Psoas muscle (tissue), 8 donors: ENCODE measurements at regions of chr16 and their contacts with region 1.

Region 1: GRCh38 chr16:15699819-15700218 is 49.8 kb downstream of the NDE1 start:
- DNase-seq: no peak
- ATAC-seq: no peak
- H3K4me3 ChIP-seq: no peak overlapping the region
- H3K27ac ChIP-seq: no peak overlapping the region
- H3K4me1 ChIP-seq: no peaks in the 10 kb centered on the region
- H3K27me3 ChIP-seq: no peaks in the 10 kb centered on the region
- CTCF ChIP-seq: no peak

Region 2: DNA sequence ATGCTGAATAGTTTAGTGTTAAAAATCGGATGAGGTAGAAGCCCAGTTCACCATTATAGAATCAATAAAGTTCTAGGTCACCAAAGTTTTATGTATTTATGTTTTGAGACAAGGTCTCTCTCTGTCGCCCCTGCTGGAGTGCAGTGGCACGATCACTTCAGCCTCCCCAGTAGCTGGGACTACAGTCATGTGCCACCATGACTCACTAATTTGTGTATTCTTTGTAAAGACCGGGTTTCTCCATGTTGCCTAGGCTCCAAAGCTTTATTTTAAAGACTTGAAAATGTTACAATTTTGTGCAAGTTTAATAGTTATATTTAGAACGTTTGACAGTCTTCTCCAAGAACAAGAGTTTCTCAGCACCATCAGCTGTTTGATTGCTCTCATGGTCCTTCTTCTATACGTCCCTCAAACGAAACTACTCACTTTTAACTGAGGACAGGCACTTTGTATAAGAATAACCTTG is 17.7 kb before region 1 on chr16:
- intact Hi-C with region 1: loop called in 1 of 2 experiments (anchors 1 kb)
- DNase-seq: peak in 1 of 2 donors; percentile 37
- ATAC-seq: no peak
- H3K4me3 ChIP-seq: no peak overlapping the region
- H3K27ac ChIP-seq: no peak overlapping the region
- H3K4me1 ChIP-seq: peaks cover 5% of the 10 kb centered on the region
- H3K27me3 ChIP-seq: no peaks in the 10 kb centered on the region
- CTCF ChIP-seq: peak; percentile 22

Region 3: GRCh38 chr16:15966420-15967222 is 266.8 kb after region 1 on chr16:
- intact Hi-C with region 1: no loop called
- DNase-seq: peak in 1 of 2 donors; percentile 62
- ATAC-seq: peak; percentile 75 to 91 (median 88)
- H3K4me3 ChIP-seq: no peak overlapping the region
- H3K27ac ChIP-seq: peak overlapping the region; percentile 7
- H3K4me1 ChIP-seq: peaks cover 42% of the 10 kb centered on the region
- H3K27me3 ChIP-seq: no peaks in the 10 kb centered on the region
- CTCF ChIP-seq: no peak